ENCODE measurements at regions of chr6 and their contacts with region 1.

Region 1: GRCh38 chr6:37239950-37240713 is 17.4 kb upstream of the TBC1D22B start:
- DNase-seq: peak; percentile 90
- ATAC-seq: peak; percentile 92
- H3K4me3 Mint-ChIP-seq: peak overlapping the region; percentile 19
- H3K27ac Mint-ChIP-seq: peak overlapping the region; percentile 84
- H3K4me1 Mint-ChIP-seq: peaks cover 46% of the 10 kb centered on the region
- H3K27me3 Mint-ChIP-seq: no peaks in the 10 kb centered on the region

Region 2: GRCh38 chr6:37005061-37005810 is 234.9 kb before region 1 on chr6 and contains the start of gene FGD2:
- CTCF ChIA-PET with region 1: no interaction called
- POLR2A ChIA-PET with region 1: no interaction called
- intact Hi-C with region 1: no loop called
- DNase-seq: no peak
- ATAC-seq: no peak
- H3K4me3 Mint-ChIP-seq: no peak within 1 kb of the TSS
- H3K27ac Mint-ChIP-seq: no peak within 1 kb of the TSS
- H3K4me1 Mint-ChIP-seq: peaks cover 12% of the 10 kb centered on the region
- H3K27me3 Mint-ChIP-seq: no peaks in the 10 kb centered on the region
- total RNA-seq, gene FGD2: 0.50 to 0.63 TPM

Region 3: GRCh38 chr6:37175332-37176267 is 64.5 kb before region 1 on chr6:
- CTCF ChIA-PET with region 1: interaction called, 7 read pairs
- POLR2A ChIA-PET with region 1: no interaction called
- intact Hi-C with region 1: loop called in 1 of 2 experiments (anchors 1 kb)
- DNase-seq: peak; percentile 30
- ATAC-seq: no peak
- H3K4me3 Mint-ChIP-seq: peak overlapping the region; percentile 91
- H3K27ac Mint-ChIP-seq: peak overlapping the region; percentile 96
- H3K4me1 Mint-ChIP-seq: peaks cover 51% of the 10 kb centered on the region
- H3K27me3 Mint-ChIP-seq: no peaks in the 10 kb centered on the region

Region 4: GRCh38 chr6:37257634-37258404 is 17.7 kb after region 1 on chr6 and contains the starts of genes TBC1D22B and TMEM217:
- CTCF ChIA-PET with region 1: interaction called, 5 read pairs
- POLR2A ChIA-PET with region 1: interaction called, 7 read pairs
- intact Hi-C with region 1: loop called (anchors 1 kb)
- DNase-seq: peak; percentile 98
- ATAC-seq: peak; percentile 99
- H3K4me3 Mint-ChIP-seq: peak within 1 kb of the TSS; percentile 74
- H3K27ac Mint-ChIP-seq: peak within 1 kb of the TSS; percentile 94
- H3K4me1 Mint-ChIP-seq: peaks cover 45% of the 10 kb centered on the region
- H3K27me3 Mint-ChIP-seq: no peaks in the 10 kb centered on the region
- total RNA-seq, gene TBC1D22B: 14.9 to 17.0 TPM
- total RNA-seq, gene TMEM217: 2.5 TPM

Region 5: DNA sequence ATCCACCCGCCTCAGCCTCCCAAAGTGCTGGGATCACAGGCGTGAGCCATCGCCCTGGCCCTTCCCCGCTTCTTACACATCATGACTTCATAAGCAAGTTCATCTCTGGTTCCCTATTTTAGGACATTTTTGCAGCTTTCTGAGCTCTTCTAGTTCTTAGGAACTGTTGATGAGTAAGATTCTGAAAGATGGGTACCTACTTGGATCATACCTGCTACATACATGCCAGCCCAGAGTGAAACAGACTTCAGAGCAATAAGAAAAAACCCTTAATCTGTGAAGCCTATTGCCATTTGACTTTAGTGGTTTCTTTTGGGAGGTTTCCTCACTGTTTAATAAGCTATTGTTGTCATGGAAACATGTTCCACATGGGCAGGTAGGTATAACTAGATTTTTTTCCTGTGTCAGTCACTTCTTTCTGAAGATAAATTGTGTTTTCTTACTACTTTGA is 45.8 kb after region 1 on chr6:
- CTCF ChIA-PET with region 1: no interaction called
- POLR2A ChIA-PET with region 1: interaction called, 4 read pairs
- intact Hi-C with region 1: loop called in 1 of 2 experiments (anchors 1 kb)
- DNase-seq: peak; percentile 40
- ATAC-seq: peak; percentile 64
- H3K4me3 Mint-ChIP-seq: no peak overlapping the region
- H3K27ac Mint-ChIP-seq: peak overlapping the region; percentile 55
- H3K4me1 Mint-ChIP-seq: peaks cover 35% of the 10 kb centered on the region
- H3K27me3 Mint-ChIP-seq: no peaks in the 10 kb centered on the region

Region 6: DNA sequence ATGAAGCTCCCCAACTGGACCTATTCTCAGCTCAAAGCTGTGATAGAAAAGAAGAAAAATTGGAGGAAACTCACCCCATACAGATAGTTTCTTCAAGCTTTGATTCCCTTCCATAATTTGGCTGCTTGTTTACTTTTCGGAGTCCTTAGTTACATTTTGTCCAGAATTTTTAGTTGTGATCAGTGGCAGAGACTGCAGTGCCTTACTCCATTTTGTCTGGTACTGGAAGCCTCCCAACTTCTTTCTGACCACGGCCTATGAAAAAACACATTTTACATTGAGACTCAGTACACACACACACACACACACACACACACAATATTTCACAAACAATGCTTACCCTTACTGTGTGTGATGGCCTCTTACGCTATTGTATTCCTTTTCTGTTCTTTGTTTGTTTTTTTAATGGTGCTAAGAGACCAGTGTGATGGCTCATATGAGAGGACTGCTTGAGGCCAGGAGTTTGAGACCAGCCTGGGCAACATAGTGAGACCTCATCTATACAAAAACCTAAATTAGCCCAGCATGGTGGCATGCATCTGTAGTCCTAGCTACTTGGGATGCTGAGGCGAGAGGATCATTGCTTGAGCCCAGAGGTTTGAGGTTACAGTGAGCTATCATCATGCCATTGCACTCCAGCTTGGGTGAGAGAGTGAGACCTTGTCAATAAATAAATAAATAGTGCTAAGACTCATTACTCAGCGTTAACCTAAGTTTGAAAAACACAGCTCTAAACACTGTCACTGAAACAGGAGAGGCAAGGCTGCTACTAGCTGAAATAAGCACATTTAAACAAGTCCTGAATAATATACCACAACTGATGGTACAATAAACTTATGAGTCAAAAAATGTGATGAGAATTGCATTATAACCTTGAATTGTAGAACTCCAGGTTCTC is 99.9 kb after region 1 on chr6:
- CTCF ChIA-PET with region 1: no interaction called
- POLR2A ChIA-PET with region 1: no interaction called
- intact Hi-C with region 1: no loop called
- DNase-seq: no peak
- ATAC-seq: no peak
- H3K4me3 Mint-ChIP-seq: no peak overlapping the region
- H3K27ac Mint-ChIP-seq: no peak overlapping the region
- H3K4me1 Mint-ChIP-seq: no peaks in the 10 kb centered on the region
- H3K27me3 Mint-ChIP-seq: peaks cover 2% of the 10 kb centered on the region

Region 7: DNA sequence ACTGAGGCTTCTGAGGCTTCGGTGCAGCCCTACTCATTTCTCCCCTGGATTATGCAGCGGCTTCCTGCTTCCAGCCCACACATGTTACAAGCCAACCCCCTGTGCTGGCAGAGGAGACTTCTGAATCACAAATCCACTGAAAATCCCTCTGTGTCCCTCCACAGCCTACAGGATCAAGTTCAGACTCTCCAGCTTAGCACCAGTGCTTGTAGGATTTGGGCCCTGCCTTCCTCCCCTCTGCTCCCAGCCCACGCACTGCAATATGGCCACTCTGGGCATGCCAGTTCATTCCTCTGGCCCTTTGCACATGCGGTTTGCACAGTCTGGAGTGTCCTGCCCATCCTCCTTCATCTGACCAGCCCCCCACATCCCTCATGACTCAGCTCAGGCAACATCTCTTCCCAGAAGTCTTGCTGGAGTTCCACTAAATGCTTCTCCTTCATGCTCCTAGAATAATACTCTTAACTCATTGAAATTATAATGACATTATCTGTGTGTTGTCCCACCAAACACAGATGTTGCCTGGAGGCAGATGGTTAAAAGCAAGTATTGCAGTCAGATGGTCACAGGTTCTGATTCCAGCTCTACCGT is 473.5 kb after region 1 on chr6:
- CTCF ChIA-PET with region 1: no interaction called
- POLR2A ChIA-PET with region 1: no interaction called
- intact Hi-C with region 1: no loop called
- DNase-seq: no peak
- ATAC-seq: no peak
- H3K4me3 Mint-ChIP-seq: no peak overlapping the region
- H3K27ac Mint-ChIP-seq: no peak overlapping the region
- H3K4me1 Mint-ChIP-seq: peaks cover 2% of the 10 kb centered on the region
- H3K27me3 Mint-ChIP-seq: peaks cover 4% of the 10 kb centered on the region

Measured in activated CD4-positive, alpha-beta T cell treated with anti-CD3 and anti-CD28 coated beads for 36 hours (primary cell).